Activated CD4-positive, alpha-beta T cell treated with anti-CD3 and anti-CD28 coated beads for 36 hours (primary cell): ENCODE measurements at regions of chr6 and their contacts with region 1.

Region 1: GRCh38 chr6:31795616-31796298 is at the start of gene VARS1:
- DNase-seq: peak; percentile 92
- ATAC-seq: peak; percentile 82
- H3K4me3 Mint-ChIP-seq: peak within 1 kb of the TSS; percentile 95
- H3K27ac Mint-ChIP-seq: peak within 1 kb of the TSS; percentile 95
- H3K4me1 Mint-ChIP-seq: peaks cover 47% of the 10 kb centered on the region
- H3K27me3 Mint-ChIP-seq: no peaks in the 10 kb centered on the region
- total RNA-seq, gene VARS1: 147 to 169 TPM

Region 2: GRCh38 chr6:31769684-31770371 is 25.9 kb before region 1 on chr6:
- CTCF ChIA-PET with region 1: interaction called, 10 read pairs
- POLR2A ChIA-PET with region 1: no interaction called
- intact Hi-C with region 1: no loop called
- DNase-seq: peak; percentile 91
- ATAC-seq: peak; percentile 88
- H3K4me3 Mint-ChIP-seq: no peak overlapping the region
- H3K27ac Mint-ChIP-seq: peak overlapping the region; percentile 80
- H3K4me1 Mint-ChIP-seq: peaks cover 19% of the 10 kb centered on the region
- H3K27me3 Mint-ChIP-seq: no peaks in the 10 kb centered on the region

Region 3: DNA sequence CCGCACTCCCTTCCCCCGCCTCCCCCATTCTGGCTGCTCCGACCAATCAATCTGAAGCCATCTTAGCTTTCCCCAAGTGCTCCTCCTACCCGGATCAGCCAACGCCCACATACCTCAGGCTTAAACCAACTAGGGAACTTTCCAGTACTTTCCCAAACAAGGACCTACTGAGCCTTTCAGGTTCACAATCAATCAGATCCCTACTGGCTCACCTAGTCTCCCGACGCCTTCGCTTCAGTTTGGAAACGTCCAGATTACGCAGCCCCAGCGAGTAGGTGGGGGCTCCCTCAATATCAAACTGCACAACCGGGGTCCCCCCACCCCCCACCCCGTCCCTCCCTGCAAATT is 18.9 kb after region 1 on chr6:
- CTCF ChIA-PET with region 1: interaction called, 6 read pairs
- POLR2A ChIA-PET with region 1: no interaction called
- intact Hi-C with region 1: loop called (anchors 2 kb)
- DNase-seq: peak; percentile 83
- ATAC-seq: peak; percentile 40
- H3K4me3 Mint-ChIP-seq: peak overlapping the region; percentile 72
- H3K27ac Mint-ChIP-seq: peak overlapping the region; percentile 79
- H3K4me1 Mint-ChIP-seq: peaks cover 50% of the 10 kb centered on the region
- H3K27me3 Mint-ChIP-seq: no peaks in the 10 kb centered on the region

Region 4: DNA sequence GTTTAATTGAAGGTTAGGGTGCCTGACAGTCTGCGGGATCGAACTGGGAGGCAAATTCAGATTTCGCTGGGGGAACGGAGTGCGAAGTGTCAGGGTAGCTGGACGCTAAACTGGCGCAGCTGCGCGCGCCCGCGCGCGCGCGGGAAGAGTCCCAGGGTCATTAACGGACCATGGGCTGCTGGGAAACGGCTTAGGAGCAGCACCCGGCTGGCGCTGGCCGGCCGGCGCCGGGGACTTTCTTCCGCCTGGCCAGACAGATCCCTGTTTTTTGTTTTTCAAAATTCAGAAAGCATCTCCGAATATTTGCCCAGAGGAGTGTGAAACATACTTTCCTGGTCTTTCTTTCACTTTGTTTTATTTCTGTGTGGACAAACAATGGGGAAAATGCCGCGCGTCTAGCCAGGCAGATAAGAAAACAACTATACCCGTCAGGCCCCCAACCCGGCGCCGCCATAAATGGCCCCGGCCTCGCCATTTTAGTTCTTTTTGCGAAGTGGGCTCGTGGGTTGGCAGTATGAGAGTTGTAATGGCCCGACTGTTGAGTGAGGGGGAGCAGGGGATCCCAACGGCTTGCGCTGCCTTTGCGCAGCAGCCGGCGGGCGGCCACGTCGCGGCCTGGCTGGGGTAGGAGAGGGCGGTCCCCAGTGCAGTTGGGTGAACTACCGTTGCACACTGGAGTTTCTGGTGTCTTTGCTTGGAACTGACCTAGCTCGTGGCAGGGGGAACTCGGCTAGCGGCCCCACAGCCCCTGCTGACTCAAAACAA is 38.9 kb after region 1 on chr6:
- CTCF ChIA-PET with region 1: interaction called, 7 read pairs
- POLR2A ChIA-PET with region 1: interaction called, 5 read pairs
- intact Hi-C with region 1: loop called in 1 of 2 experiments (anchors 1 kb)
- DNase-seq: peak; percentile 85
- ATAC-seq: peak; percentile 63
- H3K4me3 Mint-ChIP-seq: peak overlapping the region; percentile 90
- H3K27ac Mint-ChIP-seq: peak overlapping the region; percentile 95
- H3K4me1 Mint-ChIP-seq: peaks cover 40% of the 10 kb centered on the region
- H3K27me3 Mint-ChIP-seq: no peaks in the 10 kb centered on the region

Region 5: GRCh38 chr6:32224696-32225095 is 428.9 kb after region 1 on chr6:
- CTCF ChIA-PET with region 1: no interaction called
- POLR2A ChIA-PET with region 1: no interaction called
- intact Hi-C with region 1: no loop called
- DNase-seq: no peak
- ATAC-seq: no peak
- H3K4me3 Mint-ChIP-seq: no peak overlapping the region
- H3K27ac Mint-ChIP-seq: no peak overlapping the region
- H3K4me1 Mint-ChIP-seq: peaks cover 13% of the 10 kb centered on the region
- H3K27me3 Mint-ChIP-seq: no peaks in the 10 kb centered on the region

Region 6: DNA sequence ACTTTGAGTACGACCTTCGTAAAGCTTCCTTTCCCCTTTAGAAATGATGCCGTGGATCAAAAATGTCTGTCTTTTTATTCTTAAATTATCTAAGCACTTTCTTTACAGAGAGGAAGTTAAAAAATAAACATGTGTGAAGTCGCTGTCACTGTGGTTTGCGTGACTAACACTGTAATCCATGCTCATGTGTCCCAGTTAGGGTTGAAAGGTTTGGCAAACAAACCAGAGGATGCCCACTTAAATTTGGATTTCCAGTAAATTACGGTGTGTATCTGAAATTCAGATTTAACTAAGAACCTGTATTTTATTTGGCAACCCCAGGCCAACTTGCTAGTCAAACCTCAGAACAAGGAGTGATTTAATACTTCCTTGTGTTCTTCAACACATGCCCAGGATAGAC is 772.8 kb after region 1 on chr6:
- CTCF ChIA-PET with region 1: no interaction called
- POLR2A ChIA-PET with region 1: no interaction called
- intact Hi-C with region 1: no loop called
- DNase-seq: no peak
- ATAC-seq: no peak
- H3K4me3 Mint-ChIP-seq: no peak overlapping the region
- H3K27ac Mint-ChIP-seq: no peak overlapping the region
- H3K4me1 Mint-ChIP-seq: peaks cover 7% of the 10 kb centered on the region
- H3K27me3 Mint-ChIP-seq: no peaks in the 10 kb centered on the region